B cell (primary cell): ENCODE measurements at regions of chr4 and their contacts with region 1.

Region 1: GRCh38 chr4:146175541-146176453 is at the start of gene LSM6:
- DNase-seq: peak; percentile 90
- ATAC-seq: peak; percentile 93
- H3K4me3 ChIP-seq: peak within 1 kb of the TSS; percentile 66 to 94 (median 85)
- H3K4me3 Mint-ChIP-seq: peak within 1 kb of the TSS; percentile 85
- H3K27ac ChIP-seq: peak within 1 kb of the TSS; percentile 73 to 87
- H3K27ac Mint-ChIP-seq: peak within 1 kb of the TSS; percentile 95
- H3K4me1 ChIP-seq: peaks cover 17 to 36% of the 10 kb centered on the region in 2 donors
- H3K4me1 Mint-ChIP-seq: peaks cover 48% of the 10 kb centered on the region
- H3K27me3 ChIP-seq: no peaks in the 10 kb centered on the region
- H3K27me3 Mint-ChIP-seq: no peaks in the 10 kb centered on the region
- CTCF ChIP-seq: no peak
- total RNA-seq, gene LSM6: 42.1 and 42.7 TPM in 2 replicates

Region 2: GRCh38 chr4:145180298-145181090 is 995.3 kb before region 1 on chr4 and contains the start of gene OTUD4:
- CTCF ChIA-PET with region 1: interaction called, 3 read pairs
- POLR2A ChIA-PET with region 1: no interaction called
- intact Hi-C with region 1: loop called (anchors 10 kb)
- DNase-seq: peak; percentile 97
- ATAC-seq: peak; percentile 82
- H3K4me3 ChIP-seq: peak within 1 kb of the TSS; percentile 68 to 93 (median 81)
- H3K4me3 Mint-ChIP-seq: peak within 1 kb of the TSS; percentile 94
- H3K27ac ChIP-seq: peak within 1 kb of the TSS; percentile 94 to 97
- H3K27ac Mint-ChIP-seq: peak within 1 kb of the TSS; percentile 96
- H3K4me1 ChIP-seq: peaks cover 29 to 35% of the 10 kb centered on the region in 2 donors
- H3K4me1 Mint-ChIP-seq: peaks cover 34% of the 10 kb centered on the region
- H3K27me3 ChIP-seq: no peaks in the 10 kb centered on the region
- H3K27me3 Mint-ChIP-seq: no peaks in the 10 kb centered on the region
- CTCF ChIP-seq: peak; percentile 31
- total RNA-seq, gene OTUD4: 51.0 and 55.7 TPM in 2 replicates

Region 3: DNA sequence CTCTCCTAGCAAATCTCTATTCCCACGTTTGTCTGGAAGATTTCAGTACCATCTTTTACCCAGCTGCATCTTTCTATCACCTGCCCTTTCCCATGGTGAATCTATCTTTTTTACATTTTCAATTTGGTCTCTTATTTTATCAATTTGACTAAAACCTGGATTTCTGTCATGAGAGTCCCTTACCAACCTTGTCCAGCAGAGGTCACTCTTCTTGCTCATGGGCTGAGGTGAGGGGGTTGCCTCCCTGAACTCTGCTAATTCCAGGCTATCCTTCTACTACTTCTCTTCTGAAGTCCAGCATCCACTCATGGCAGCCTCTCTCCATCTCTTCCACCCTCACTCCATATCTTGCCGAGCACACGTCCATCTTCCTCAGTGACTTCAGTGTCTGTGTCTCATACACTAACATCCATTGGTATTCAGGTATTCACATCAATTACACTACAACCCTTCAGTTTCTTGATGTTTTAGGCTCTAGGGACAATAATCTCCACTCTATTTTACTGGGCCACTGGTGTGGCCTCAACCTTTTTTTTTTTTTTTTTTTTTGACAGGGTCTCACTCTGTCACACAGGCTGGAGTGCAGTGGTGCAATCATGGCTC is 219.4 kb before region 1 on chr4:
- CTCF ChIA-PET with region 1: no interaction called
- POLR2A ChIA-PET with region 1: no interaction called
- intact Hi-C with region 1: loop called (anchors 1 kb)
- DNase-seq: peak; percentile 78
- ATAC-seq: peak; percentile 61
- H3K4me3 ChIP-seq: no peak overlapping the region
- H3K4me3 Mint-ChIP-seq: no peak overlapping the region
- H3K27ac ChIP-seq: no peak overlapping the region
- H3K27ac Mint-ChIP-seq: no peak overlapping the region
- H3K4me1 ChIP-seq: peaks cover 5 to 6% of the 10 kb centered on the region in 2 donors
- H3K4me1 Mint-ChIP-seq: peaks cover 6% of the 10 kb centered on the region
- H3K27me3 ChIP-seq: no peaks in the 10 kb centered on the region
- H3K27me3 Mint-ChIP-seq: no peaks in the 10 kb centered on the region
- CTCF ChIP-seq: peak; percentile 86

Region 4: DNA sequence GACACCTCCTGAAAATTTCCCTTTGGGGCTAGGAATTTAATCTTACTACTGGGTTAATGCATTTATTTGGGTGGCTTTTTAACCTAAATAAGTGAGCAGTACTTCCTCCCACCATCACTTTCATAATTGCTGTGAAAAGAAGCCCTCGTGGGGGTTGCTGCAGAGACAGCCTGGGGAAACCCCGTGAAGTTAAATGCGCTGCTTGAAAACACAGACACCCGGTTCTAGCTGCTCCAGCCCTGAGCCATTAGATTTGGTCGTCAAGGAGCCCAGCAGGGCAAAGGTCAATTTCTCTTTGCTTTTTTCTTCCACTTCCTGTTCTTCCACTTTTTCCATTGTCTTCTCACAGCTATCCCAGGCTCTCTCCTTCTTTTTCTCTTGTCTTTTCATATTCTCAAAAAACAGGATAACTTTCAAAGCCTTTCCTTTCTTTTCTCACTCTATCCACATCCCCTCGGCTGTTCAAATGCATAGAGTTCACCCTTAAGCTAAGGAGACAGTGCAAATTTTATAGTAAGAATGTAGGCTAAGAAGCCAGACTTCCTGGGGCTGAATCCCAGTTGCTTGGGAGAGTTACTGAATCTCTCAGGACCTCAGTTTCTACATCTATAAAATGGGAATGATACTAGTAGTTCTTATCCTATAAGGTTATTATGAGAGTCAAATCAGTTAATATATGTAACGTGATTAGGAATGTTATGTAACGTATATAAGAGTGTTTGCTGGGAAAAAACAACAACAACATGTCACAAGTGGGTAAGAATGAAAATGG is 145.7 kb before region 1 on chr4:
- CTCF ChIA-PET with region 1: no interaction called
- POLR2A ChIA-PET with region 1: no interaction called
- intact Hi-C with region 1: loop called (anchors 5 kb)
- DNase-seq: peak; percentile 85
- ATAC-seq: peak; percentile 99
- H3K4me3 ChIP-seq: peak overlapping the region in 2 of 5 experiments; percentile 23 to 49
- H3K4me3 Mint-ChIP-seq: peak overlapping the region; percentile 69
- H3K27ac ChIP-seq: peak overlapping the region; percentile 30 to 65
- H3K27ac Mint-ChIP-seq: peak overlapping the region; percentile 72
- H3K4me1 ChIP-seq: peaks cover 43 to 45% of the 10 kb centered on the region in 2 donors
- H3K4me1 Mint-ChIP-seq: peaks cover 52% of the 10 kb centered on the region
- H3K27me3 ChIP-seq: no peaks in the 10 kb centered on the region
- H3K27me3 Mint-ChIP-seq: no peaks in the 10 kb centered on the region
- CTCF ChIP-seq: no peak

Region 5: GRCh38 chr4:146059865-146060264 is 115.9 kb before region 1 on chr4:
- CTCF ChIA-PET with region 1: no interaction called
- POLR2A ChIA-PET with region 1: no interaction called
- intact Hi-C with region 1: loop called (anchors 5 kb)
- DNase-seq: peak; percentile 95
- ATAC-seq: peak; percentile 89
- H3K4me3 ChIP-seq: peak overlapping the region in 3 of 5 experiments; percentile 21 to 44 (median 41)
- H3K4me3 Mint-ChIP-seq: no peak overlapping the region
- H3K27ac ChIP-seq: peak overlapping the region; percentile 82 to 85
- H3K27ac Mint-ChIP-seq: no peak overlapping the region
- H3K4me1 ChIP-seq: peaks cover 60 to 66% of the 10 kb centered on the region in 2 donors
- H3K4me1 Mint-ChIP-seq: peaks cover 40% of the 10 kb centered on the region
- H3K27me3 ChIP-seq: peaks cover 0 to 4% (median 0%) of the 10 kb centered on the region in 4 experiments
- H3K27me3 Mint-ChIP-seq: no peaks in the 10 kb centered on the region
- CTCF ChIP-seq: no peak

Region 6: GRCh38 chr4:146110871-146111485 is 64.8 kb before region 1 on chr4:
- CTCF ChIA-PET with region 1: no interaction called
- POLR2A ChIA-PET with region 1: no interaction called
- intact Hi-C with region 1: loop called (anchors 5 kb)
- DNase-seq: peak; percentile 52
- ATAC-seq: peak; percentile 53
- H3K4me3 ChIP-seq: no peak overlapping the region
- H3K4me3 Mint-ChIP-seq: peak overlapping the region; percentile 18
- H3K27ac ChIP-seq: no peak overlapping the region
- H3K27ac Mint-ChIP-seq: no peak overlapping the region
- H3K4me1 ChIP-seq: peaks cover 31 to 32% of the 10 kb centered on the region in 2 donors
- H3K4me1 Mint-ChIP-seq: peaks cover 36% of the 10 kb centered on the region
- H3K27me3 ChIP-seq: peaks cover 0 to 3% (median 0%) of the 10 kb centered on the region in 4 experiments
- H3K27me3 Mint-ChIP-seq: no peaks in the 10 kb centered on the region
- CTCF ChIP-seq: no peak

Region 7: DNA sequence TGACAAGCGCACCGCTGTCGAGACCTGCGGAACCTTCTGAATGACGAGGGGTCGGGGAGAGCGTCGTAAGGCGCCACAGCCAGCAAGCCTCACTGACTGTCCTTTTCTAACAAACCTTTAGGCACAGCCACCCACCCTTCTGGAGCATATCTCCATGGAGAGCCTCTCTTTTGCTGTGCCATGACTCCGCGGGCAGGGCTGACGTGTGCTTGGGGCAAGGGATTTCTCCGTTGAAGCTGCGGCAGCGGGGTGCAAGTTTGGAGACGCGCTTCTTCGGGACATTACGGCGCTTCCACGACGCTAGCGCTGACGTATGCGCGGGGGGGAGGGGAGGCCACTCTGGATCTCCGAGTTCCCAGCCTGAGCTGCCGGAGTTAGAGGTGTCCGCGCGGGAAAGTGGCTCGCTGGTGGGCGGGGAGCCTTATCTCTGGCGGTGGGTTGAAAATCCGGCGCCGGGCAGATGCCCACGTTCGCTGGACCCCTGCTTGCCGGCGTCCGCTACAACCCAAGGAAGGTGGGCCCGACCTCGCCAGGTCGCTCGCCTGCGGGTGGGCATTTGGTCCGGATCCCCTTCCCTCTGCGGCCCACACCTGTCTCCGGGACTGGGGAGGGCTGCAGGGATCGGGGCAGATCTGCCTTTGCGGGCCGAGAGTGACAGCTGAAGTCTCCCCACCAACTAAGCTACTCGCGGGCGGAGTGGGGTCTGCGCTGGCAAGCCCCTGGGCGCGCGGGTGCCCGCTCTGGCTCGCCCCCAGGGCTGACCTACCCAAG is 346.5 kb after region 1 on chr4:
- CTCF ChIA-PET with region 1: no interaction called
- POLR2A ChIA-PET with region 1: no interaction called
- intact Hi-C with region 1: loop called (anchors 10 kb)
- DNase-seq: peak; percentile 86
- ATAC-seq: peak; percentile 75
- H3K4me3 ChIP-seq: peak overlapping the region; percentile 61 to 98 (median 96)
- H3K4me3 Mint-ChIP-seq: no peak overlapping the region
- H3K27ac ChIP-seq: peak overlapping the region; percentile 62 to 75
- H3K27ac Mint-ChIP-seq: no peak overlapping the region
- H3K4me1 ChIP-seq: peaks cover 18 to 22% of the 10 kb centered on the region in 2 donors
- H3K4me1 Mint-ChIP-seq: peaks cover 22% of the 10 kb centered on the region
- H3K27me3 ChIP-seq: no peaks in the 10 kb centered on the region
- H3K27me3 Mint-ChIP-seq: no peaks in the 10 kb centered on the region
- CTCF ChIP-seq: no peak